Activated CD8-positive, alpha-beta T cell treated with anti-CD3 and anti-CD28 coated beads for 36 hours (primary cell): ENCODE measurements at regions of chr14 and their contacts with region 1.

Region 1: GRCh38 chr14:32076278-32077080 is 625 bp upstream of the ARHGAP5 start:
- DNase-seq: peak; percentile 77
- ATAC-seq: peak; percentile 72
- H3K4me3 Mint-ChIP-seq: peak overlapping the region; percentile 87
- H3K27ac Mint-ChIP-seq: peak overlapping the region; percentile 89
- H3K4me1 Mint-ChIP-seq: peaks cover 32% of the 10 kb centered on the region
- H3K27me3 Mint-ChIP-seq: peaks cover 3% of the 10 kb centered on the region
- CTCF ChIP-seq: no peak

Region 2: DNA sequence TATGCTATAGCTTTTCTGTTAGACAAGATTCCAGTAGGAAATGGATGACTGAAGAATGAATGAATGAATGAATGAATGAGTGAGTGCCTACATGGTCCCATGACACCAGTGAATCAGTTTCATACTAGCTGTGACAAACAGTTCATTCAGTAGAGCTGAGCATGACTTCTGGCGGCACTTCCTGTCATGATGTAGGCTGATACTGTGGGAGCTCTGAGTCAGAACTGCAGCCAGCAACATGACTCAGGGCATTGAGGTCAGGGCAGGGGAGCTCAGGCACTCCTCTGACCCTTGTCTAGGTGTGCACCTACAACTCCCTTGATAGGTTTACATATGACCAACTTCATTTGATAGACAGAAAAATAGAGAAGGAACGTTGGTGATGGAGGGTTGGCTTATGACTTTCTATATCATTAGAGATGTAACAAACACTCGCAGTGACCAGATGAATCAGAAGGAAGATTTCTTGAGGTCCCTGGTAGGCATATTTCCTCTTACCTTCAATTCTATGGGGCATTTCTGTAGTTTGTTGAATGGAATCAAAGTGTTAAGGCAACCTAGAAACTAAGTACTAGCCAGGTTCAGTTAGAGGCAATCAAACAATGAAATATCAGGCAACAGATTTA is 138.6 kb before region 1 on chr14:
- CTCF ChIA-PET with region 1: no interaction called
- POLR2A ChIA-PET with region 1: no interaction called
- intact Hi-C with region 1: loop called (anchors 10 kb)
- DNase-seq: peak; percentile 87
- ATAC-seq: peak; percentile 100
- H3K4me3 Mint-ChIP-seq: no peak overlapping the region
- H3K27ac Mint-ChIP-seq: peak overlapping the region; percentile 50
- H3K4me1 Mint-ChIP-seq: peaks cover 9% of the 10 kb centered on the region
- H3K27me3 Mint-ChIP-seq: peaks cover 4% of the 10 kb centered on the region
- CTCF ChIP-seq: no peak

Region 3: GRCh38 chr14:32202998-32203882 is 126.8 kb after region 1 on chr14 and contains the start of gene RNU6-8:
- CTCF ChIA-PET with region 1: interaction called, 8 read pairs
- POLR2A ChIA-PET with region 1: interaction called, 6 read pairs
- intact Hi-C with region 1: loop called (anchors 1 kb)
- DNase-seq: peak; percentile 89
- ATAC-seq: peak; percentile 83
- H3K4me3 Mint-ChIP-seq: peak within 1 kb of the TSS; percentile 78
- H3K27ac Mint-ChIP-seq: peak within 1 kb of the TSS; percentile 98
- H3K4me1 Mint-ChIP-seq: peaks cover 40% of the 10 kb centered on the region
- H3K27me3 Mint-ChIP-seq: no peaks in the 10 kb centered on the region
- CTCF ChIP-seq: no peak
- total RNA-seq, gene RNU6-8: not detected

Region 4: DNA sequence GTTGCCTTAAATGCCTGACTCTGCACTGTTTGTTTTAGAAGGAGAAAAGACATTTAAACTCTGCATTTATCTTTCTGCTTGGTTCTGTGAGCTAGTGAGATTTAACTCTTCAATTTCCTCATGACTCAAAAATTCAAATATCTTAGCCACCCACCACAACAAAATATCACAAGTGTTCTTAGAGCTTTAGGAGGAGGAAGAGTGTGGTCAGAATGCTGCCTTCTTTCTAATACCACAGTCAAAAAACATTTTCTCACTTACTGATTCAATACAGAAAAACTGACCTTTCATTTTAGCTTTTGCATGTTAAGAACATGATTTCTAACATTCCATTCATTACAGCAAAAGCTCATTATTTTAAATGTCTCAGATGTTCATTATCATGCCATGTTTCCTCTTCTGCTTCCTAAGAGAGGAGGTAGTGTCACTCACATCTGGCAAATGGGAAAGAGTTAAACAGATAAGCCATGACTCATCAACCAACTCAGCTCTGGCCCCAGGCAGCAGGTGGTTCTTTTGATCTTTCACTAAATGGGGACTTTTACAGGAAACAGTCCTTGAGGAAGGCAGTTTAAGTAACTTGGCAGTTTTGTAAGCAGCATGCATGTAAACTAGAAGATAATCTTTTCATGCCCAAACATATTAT is 183.0 kb after region 1 on chr14:
- CTCF ChIA-PET with region 1: interaction called, 76 read pairs
- POLR2A ChIA-PET with region 1: interaction called, 3 read pairs
- intact Hi-C with region 1: no loop called
- DNase-seq: peak; percentile 38
- ATAC-seq: peak; percentile 81
- H3K4me3 Mint-ChIP-seq: no peak overlapping the region
- H3K27ac Mint-ChIP-seq: peak overlapping the region; percentile 0
- H3K4me1 Mint-ChIP-seq: peaks cover 15% of the 10 kb centered on the region
- H3K27me3 Mint-ChIP-seq: no peaks in the 10 kb centered on the region
- CTCF ChIP-seq: no peak

Region 5: DNA sequence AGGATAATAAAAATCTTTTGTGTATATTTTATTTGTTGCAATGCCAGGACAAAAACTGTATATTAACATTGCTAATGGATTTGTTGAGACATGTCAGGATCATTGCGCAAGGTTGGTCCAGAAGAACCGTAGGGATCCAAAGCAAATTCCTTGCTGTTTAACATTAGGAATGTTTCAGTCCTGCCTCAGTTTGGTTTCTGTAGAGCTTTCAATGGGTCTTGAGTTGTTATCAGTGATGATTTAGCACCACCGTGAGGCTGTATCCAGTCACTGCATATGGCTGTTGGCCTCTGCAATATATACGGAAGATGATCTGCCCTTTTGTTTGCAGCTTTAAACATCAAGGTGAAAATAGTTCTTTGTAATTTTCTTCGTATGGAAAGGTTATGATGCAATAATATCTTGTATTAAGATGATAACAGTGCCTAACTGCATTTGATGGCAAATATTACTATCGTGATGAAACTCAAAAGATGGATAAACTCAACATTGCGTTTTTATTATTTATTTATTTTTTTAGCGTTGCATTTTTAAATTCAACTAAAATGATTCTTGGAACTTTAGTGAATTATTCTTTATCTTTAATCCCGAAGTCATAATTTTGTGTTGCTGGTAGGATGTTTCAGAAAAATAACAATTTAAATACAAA is 483.9 kb after region 1 on chr14:
- CTCF ChIA-PET with region 1: interaction called, 4 read pairs
- POLR2A ChIA-PET with region 1: no interaction called
- intact Hi-C with region 1: loop called (anchors 10 kb)
- DNase-seq: peak; percentile 52
- ATAC-seq: peak; percentile 68
- H3K4me3 Mint-ChIP-seq: no peak overlapping the region
- H3K27ac Mint-ChIP-seq: no peak overlapping the region
- H3K4me1 Mint-ChIP-seq: peaks cover 11% of the 10 kb centered on the region
- H3K27me3 Mint-ChIP-seq: no peaks in the 10 kb centered on the region
- CTCF ChIP-seq: peak; percentile 75